ENCODE measurements at regions of chr5 and their contacts with region 1.

Region 1: GRCh38 chr5:142356716-142357473 is 32.1 kb upstream of the SPRY4 start:
- DNase-seq: peak; percentile 86 to 90
- ATAC-seq: peak; percentile 90 to 95 (median 92)
- H3K4me3 ChIP-seq: peak overlapping the region; percentile 38 to 81 (median 66)
- H3K27ac ChIP-seq: peak overlapping the region; percentile 90 to 98 (median 96)
- H3K4me1 ChIP-seq: peaks cover 0 to 28% (median 18%) of the 10 kb centered on the region in 9 donors
- H3K27me3 ChIP-seq: peaks cover 0 to 65% (median 0%) of the 10 kb centered on the region in 7 donors
- CTCF ChIP-seq: peak in 2 of 9 donors; percentile 1 to 6

Region 2: GRCh38 chr5:142324871-142325724 is 31.8 kb before region 1 on chr5 and contains the start of gene SPRY4:
- intact Hi-C with region 1: loop called in 6 of 10 experiments (anchors 1 to 5 kb)
- DNase-seq: peak; percentile 94 to 95
- ATAC-seq: peak; percentile 75 to 89 (median 81)
- H3K4me3 ChIP-seq: peak within 1 kb of the TSS; percentile 63 to 99 (median 79)
- H3K27ac ChIP-seq: peak within 1 kb of the TSS; percentile 88 to 97 (median 92)
- H3K4me1 ChIP-seq: peaks cover 13 to 73% (median 56%) of the 10 kb centered on the region in 9 donors
- H3K27me3 ChIP-seq: peaks cover 0 to 76% (median 0%) of the 10 kb centered on the region in 7 donors
- CTCF ChIP-seq: peak in 1 of 9 donors; percentile 4
- total RNA-seq, gene SPRY4: 7.4 to 13.7 (median 10.1) TPM

Region 3: DNA sequence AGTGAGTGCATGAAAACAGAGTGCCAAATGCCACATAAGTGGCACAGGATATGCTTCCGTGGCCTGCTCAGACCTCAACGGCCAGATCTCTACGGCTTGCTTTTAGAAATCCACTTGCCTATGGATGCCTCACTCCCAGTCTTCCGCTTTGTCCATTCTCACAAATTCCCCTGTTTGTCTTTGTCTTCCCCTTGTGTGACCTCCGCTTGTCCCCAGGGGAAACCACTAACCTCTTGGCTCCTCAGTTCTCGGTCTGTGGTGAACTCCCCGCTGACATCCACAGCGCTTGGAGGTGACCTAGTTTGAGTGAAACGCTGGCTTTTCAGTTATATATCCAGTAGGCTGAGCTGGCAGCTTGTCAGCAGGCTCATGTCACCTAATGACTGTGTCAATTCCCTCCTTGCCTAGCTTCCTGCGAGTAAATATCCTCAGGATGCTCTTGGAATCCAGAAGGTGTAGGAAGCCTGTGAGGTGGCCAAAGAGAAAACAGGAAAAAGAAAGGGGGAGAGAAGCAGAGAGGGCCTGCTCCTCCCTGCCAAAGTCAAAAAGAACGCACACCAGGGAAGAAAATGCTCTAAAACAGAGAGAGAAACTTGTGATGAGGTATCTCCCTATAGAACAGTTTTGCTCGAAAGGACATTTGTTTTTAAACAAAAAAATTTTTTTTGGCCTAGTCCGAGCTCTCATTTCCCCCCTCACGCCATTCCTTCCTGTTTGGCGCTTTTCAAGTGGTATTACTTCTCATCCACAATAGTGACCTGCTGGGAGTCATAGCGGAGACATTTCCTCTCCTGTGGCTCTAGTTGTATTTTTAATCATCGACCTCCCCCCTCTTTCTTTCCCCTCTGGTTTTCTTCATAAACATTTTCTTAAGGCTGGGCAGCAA is 69.5 kb after region 1 on chr5:
- intact Hi-C with region 1: loop called in 4 of 10 experiments (anchors 5 kb)
- DNase-seq: peak; percentile 60 to 85
- ATAC-seq: peak; percentile 67 to 84 (median 78)
- H3K4me3 ChIP-seq: peak overlapping the region in 1 of 10 donors; percentile 18
- H3K27ac ChIP-seq: peak overlapping the region in 9 of 10 donors; percentile 35 to 76 (median 64)
- H3K4me1 ChIP-seq: peaks cover 5 to 55% (median 33%) of the 10 kb centered on the region in 9 donors
- H3K27me3 ChIP-seq: no peaks in the 10 kb centered on the region
- CTCF ChIP-seq: no peak

Region 4: DNA sequence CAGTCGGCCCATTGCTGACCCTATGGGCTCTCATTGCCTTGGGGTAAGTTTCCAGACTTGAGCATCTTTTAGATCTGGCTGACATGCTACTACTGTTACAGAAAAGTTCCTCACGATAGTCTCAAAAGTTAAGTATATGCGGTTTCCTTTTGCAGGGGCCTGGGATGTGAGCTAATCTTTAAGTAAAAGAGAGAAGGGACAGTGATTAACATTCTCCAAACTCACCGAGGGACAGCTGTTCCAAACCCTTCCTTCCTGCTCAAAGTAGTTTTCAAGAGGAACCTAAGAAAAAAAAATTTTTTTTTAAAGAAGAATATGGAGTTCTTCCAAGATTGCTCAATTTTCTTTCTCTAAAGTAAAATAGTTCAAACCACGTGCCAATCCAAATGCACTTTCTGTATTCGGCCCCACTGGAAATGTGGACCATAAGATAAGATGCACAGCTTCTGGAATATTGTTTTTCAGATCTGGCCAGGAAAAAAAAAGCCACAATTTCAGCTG is 135.9 kb after region 1 on chr5:
- intact Hi-C with region 1: loop called in 1 of 10 experiments (anchors 2 kb)
- DNase-seq: peak in 1 of 2 donors; percentile 11
- ATAC-seq: peak in 7 of 8 donors; percentile 30 to 73 (median 42)
- H3K4me3 ChIP-seq: peak overlapping the region in 3 of 10 donors; percentile 4 to 17 (median 14)
- H3K27ac ChIP-seq: peak overlapping the region; percentile 14 to 83 (median 54)
- H3K4me1 ChIP-seq: peaks cover 2 to 58% (median 19%) of the 10 kb centered on the region in 9 donors
- H3K27me3 ChIP-seq: no peaks in the 10 kb centered on the region
- CTCF ChIP-seq: no peak